Activated CD4-positive, alpha-beta memory T cell treated with anti-CD3 and anti-CD28 coated beads for 36 hours (primary cell): ENCODE measurements at regions of chr6 and their contacts with region 1.

Region 1: DNA sequence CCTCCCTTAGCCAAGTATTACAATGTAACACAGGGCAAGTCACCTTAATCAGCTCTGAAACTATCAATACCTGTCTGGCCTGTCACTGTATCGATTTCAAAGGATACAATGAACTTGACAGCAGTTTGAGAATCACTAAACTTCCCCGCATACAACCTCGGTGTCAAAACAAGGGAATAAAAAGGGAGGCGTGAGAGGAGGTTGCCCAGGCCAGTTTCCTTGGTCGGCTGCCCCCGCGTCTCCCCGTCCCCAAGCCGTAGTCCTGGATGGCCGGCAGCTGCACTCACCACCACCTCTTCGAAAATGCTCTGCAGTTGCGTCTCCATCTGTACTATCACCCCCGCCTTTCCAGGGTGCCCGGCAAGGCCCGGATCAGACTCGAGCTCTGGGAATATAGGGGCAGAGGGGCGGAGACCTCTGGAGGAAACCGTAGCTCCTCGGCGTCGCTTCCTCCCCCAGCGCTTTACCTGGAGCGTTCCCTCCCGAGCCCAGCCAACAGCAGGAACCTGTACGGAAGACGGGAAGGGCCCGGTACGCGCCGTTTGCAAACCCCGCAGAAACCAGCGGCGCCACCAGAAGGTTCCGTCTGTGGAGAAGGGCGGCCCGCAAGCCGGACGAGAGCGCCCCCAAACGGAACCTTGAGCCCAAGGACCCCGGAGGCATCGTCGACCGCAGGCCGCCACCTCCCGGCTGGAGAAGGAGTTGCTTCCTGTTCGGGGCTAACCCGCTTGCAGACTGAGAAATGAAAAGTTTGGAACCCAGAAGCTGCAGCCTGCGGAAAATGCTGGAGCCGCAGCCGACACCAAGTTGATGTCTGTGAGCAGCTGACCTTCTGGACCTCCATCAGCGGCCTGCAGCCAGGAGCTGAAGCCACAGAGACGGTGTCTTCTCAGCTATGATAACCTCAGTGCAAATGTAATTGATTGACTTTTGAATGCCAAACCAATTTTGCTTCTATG is at the start of gene MED23:
- DNase-seq: peak; percentile 97
- H3K4me3 Mint-ChIP-seq: peak within 1 kb of the TSS; percentile 99
- H3K27ac Mint-ChIP-seq: peak within 1 kb of the TSS; percentile 85
- H3K4me1 Mint-ChIP-seq: peaks cover 37% of the 10 kb centered on the region
- H3K27me3 Mint-ChIP-seq: no peaks in the 10 kb centered on the region
- total RNA-seq, gene MED23: 25.5 to 26.0 TPM

Region 2: DNA sequence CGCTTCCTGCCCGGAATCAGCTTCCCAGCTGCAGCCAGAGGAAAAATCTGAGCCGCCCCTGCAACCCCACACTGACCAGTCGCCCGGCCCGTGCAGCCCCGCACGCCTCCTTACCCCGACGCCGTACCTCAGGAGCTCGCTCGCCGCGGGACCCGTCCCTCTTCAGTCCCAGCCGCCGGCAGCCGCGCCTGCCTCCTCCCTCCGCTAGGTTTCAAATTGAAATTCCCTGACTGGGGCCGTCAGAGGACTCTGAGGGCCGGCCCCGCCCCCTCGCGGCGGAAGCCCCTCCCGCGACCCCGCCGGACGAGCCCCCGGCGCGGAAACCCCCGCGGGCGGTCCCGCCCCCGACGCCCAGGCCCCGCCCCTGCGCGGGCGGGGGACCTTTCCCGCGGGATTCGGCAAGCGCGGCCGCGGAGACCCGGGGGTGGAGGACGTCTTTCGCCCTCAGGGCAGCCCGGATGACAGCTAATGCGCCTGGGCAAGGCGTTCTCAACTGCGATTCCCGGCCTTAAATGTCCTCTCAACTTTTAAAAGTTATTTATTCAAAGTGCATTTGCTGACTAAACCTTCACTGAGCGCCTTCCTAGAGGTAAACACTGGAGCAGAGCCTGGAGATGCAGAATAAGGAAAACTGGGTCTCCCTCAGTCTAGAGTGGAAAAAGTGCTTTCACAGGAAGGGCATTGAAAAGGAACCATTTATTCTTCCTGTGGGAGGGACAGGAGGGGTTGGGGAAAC is 564.8 kb before region 1 on chr6 and contains the start of gene EPB41L2:
- CTCF ChIA-PET with region 1: interaction called, 3 read pairs
- POLR2A ChIA-PET with region 1: no interaction called
- intact Hi-C with region 1: loop called (anchors 2 kb)
- DNase-seq: peak; percentile 85
- H3K4me3 Mint-ChIP-seq: peak within 1 kb of the TSS; percentile 80
- H3K27ac Mint-ChIP-seq: no peak within 1 kb of the TSS
- H3K4me1 Mint-ChIP-seq: peaks cover 27% of the 10 kb centered on the region
- H3K27me3 Mint-ChIP-seq: no peaks in the 10 kb centered on the region
- total RNA-seq, gene EPB41L2: 30.4 to 37.8 TPM

Region 3: GRCh38 chr6:131519670-131520436 is 108.2 kb before region 1 on chr6:
- CTCF ChIA-PET with region 1: interaction called, 10 read pairs
- POLR2A ChIA-PET with region 1: no interaction called
- intact Hi-C with region 1: loop called (anchors 1 kb)
- DNase-seq: peak; percentile 60
- H3K4me3 Mint-ChIP-seq: no peak overlapping the region
- H3K27ac Mint-ChIP-seq: no peak overlapping the region
- H3K4me1 Mint-ChIP-seq: peaks cover 12% of the 10 kb centered on the region
- H3K27me3 Mint-ChIP-seq: peaks cover 2% of the 10 kb centered on the region

Region 4: DNA sequence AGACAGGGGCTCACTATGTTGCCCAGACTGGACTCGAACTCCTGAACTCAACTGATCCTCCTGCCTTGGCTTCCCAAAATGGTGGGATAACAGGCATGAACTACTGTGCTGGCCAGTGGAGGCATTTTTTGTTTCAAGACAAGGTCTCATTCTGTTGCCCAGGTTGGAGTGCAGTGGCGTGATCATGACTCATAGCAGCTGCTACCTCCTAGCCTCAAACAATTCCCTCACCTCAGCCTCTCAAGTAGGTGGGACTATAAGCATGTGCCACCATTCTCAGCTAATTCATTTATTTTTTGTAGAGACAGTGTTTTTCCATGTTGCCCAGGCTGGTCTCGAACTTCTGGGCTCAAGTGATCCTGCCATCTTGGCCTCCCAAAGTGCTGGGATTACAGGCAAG is 26.3 kb after region 1 on chr6:
- CTCF ChIA-PET with region 1: interaction called, 15 read pairs
- POLR2A ChIA-PET with region 1: no interaction called
- intact Hi-C with region 1: no loop called
- DNase-seq: no peak
- H3K4me3 Mint-ChIP-seq: no peak overlapping the region
- H3K27ac Mint-ChIP-seq: no peak overlapping the region
- H3K4me1 Mint-ChIP-seq: no peaks in the 10 kb centered on the region
- H3K27me3 Mint-ChIP-seq: no peaks in the 10 kb centered on the region

Region 5: GRCh38 chr6:131909408-131910218 is 281.6 kb after region 1 on chr6:
- CTCF ChIA-PET with region 1: interaction called, 4 read pairs
- POLR2A ChIA-PET with region 1: no interaction called
- intact Hi-C with region 1: loop called (anchors 5 kb)
- DNase-seq: peak; percentile 79
- H3K4me3 Mint-ChIP-seq: no peak overlapping the region
- H3K27ac Mint-ChIP-seq: no peak overlapping the region
- H3K4me1 Mint-ChIP-seq: peaks cover 6% of the 10 kb centered on the region
- H3K27me3 Mint-ChIP-seq: peaks cover 19% of the 10 kb centered on the region